ENCODE measurements at regions of chr17 and their contacts with region 1.

Region 1: DNA sequence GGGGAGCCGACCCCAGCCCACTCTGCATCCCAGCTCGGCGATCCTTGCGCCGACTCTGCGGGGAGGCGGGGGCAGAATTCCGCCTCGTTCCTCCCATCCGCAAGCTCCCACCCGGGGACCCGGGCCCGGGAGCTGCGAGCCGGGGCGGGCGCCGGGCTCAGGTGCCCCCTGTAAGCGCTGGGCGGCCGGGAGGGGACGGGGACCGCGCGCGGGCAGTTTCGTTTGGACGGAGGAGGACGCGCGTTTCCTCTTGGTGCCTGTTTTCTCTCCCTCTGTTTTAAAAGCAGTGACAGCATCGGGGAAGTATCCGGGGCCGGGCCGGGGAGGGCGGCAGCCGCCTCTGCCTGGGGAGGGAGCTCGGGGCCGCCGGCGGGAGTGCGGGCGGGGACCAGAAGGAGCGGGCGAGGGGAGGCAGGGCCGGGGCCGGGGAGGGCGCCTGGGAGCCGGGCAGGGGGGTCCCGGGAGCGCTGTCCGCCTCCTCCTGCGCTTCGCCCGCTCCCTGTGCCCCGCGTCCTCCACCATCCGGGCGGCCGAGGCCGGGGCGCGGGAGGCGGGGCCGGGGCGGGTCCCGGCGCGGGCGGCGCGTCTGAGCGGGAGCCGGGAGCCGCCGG is 57.0 kb downstream of the RAP1GAP2 start:
- DNase-seq: no peak

Region 2: GRCh38 chr17:2700516-2701141 is 152.6 kb before region 1 on chr17:
- in situ Hi-C with region 1: no loop called
- DNase-seq: no peak

Region 3: GRCh38 chr17:2718150-2718938 is 134.9 kb before region 1 on chr17:
- in situ Hi-C with region 1: no loop called
- DNase-seq: no peak

Region 4: GRCh38 chr17:3012926-3013581 is 159.8 kb after region 1 on chr17:
- in situ Hi-C with region 1: loop called (anchors 25 kb)
- DNase-seq: peak; percentile 78

Measured in SK-MEL-5 (cell line).